ENCODE measurements at regions of chr6 and their contacts with region 1.

Region 1: DNA sequence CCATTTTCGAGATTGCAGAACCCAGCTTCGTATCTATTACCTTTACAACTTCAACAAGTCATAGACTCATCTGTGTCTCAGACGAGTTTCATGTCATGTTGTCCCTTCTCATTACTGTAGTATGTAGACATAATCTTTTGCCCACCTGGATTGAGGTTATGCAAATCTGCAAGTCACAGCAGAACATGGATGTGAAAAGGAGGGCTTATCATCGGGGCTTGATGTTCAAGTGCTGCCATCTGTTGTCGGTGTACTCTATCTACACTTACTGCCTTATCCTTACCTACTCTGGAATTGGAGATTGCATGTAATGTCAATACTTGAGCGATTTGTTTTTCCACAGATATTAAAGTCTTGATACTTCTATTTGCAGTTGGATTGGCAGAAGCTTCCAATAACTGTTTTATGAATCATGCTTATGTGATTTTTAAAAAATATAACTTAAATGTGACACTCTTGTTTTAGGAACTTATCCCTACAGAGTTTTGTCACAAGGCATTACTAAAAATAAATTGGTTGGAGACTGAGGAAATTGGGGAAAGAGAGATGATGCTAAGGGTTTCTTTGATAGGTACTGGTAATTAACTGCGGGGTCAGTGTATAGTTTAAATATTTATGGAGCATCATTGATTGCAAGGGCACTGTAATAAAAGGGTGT is 3.0 kb upstream of the GOPC start:
- DNase-seq: no peak
- ATAC-seq: no peak

Region 2: GRCh38 chr6:116902629-116903028 is 702.7 kb before region 1 on chr6:
- intact Hi-C with region 1: no loop called
- DNase-seq: no peak
- ATAC-seq: no peak

Region 3: DNA sequence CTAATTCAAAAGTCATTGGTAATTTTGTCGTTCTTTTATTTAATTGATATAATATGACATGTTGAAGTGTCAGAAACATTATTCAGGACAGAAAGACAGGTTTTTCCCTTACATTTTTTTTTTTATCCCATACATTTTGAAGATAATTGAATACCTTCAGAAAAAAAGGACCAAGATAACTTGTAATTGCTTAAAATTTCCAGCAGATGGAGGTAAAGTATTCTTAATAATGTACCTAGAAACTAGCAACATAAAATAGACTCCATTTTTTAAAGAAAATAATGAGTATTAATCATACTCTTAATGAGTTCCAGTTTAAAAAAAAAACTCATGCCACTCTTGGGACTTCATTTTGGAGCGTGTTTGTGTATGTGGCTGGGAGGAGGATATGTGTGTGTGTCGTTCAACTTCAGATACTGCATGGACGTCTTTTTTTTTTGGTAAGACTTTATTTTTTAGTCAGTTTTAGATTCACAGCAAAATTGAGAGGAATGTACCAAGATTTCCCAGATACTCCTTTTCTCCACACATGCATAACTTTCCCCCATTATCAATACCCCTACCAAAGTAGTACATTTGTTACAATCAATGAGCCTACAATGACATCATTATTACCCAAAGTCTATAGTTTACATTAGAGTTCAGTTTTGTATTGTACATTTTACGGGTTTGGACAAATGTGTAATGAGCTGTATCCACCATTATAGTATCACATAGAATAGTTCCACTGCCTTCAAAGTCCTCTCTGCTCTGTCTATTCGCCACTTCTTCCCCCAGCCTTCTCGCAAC is 259.0 kb before region 1 on chr6:
- intact Hi-C with region 1: loop called (anchors 2 kb)
- DNase-seq: no peak
- ATAC-seq: no peak

Measured in left ventricle myocardium superior (tissue), 1 donor.